Right ventricle myocardium superior (tissue), 1 donor: ENCODE measurements at regions of chr1 and their contacts with region 1.

Region 1: DNA sequence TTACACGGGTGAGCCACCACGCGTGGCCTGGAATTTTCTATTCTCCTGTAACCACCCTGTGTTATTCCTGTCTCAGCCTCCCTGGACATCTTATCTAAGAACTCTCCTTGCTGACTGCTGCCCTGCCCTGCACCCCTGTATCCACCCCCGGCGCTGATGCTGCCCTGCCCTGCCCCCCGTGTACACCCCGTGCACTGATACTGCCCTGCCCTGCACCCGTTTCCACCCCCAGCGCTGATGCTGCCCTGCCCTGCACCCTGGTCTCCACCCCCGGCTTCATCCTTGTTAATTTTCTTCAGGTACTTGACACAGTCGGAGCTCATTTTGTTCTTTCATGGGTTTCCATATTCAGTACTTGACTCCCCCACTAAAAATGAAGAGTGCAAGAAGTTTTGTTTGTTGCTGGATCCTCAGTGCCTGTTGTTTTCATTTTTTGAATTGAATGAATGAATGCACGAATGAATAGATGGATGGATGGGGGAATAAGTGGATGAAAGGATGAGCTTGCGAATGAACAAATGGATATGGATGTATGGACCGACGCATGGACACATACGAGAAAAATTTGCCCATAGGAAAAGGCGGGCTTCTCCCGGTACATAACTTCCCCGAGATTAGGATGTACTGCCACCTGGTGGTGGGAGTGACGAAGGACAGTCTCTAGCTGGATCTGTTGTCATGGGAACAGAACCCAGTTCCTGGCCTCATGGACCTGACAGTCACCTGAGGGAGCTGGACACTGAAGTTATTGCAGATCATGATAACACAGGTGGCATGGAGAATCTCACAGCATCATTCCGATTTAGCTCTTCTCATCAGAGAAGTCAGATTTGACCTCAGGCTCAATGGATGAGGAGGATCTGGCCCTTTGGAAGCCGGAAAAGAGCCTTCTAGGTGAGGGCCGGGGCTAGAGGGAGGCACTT is 14.9 kb downstream of the AADACL4 start:
- DNase-seq: peak; percentile 76
- ATAC-seq: peak; percentile 94

Region 2: DNA sequence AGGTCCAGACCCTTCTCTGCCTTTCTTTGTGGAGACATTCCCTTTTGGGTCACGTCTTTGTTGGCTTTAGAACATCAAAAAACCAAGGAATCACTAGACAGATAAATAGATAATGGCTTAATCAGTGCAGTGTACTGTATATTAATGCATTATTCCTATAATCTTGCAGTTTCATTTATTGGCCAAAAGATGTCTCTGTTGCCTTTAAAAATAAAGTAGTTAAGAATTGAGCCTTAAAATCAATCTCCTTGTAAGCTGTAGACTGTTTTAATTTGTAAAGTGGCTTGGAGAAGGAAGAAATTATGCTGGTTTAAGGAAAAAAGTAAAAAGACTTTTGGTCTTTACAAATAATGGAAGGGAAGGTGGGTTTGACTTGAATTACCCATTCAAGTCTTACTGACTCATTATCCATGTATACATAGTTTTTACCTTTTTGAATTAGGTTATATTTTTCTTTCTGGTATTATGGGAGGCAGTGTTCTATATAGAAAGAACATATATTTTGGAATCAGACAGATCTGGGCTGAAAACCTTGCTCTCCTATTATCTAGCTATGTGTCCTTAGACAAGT is 344.4 kb before region 1 on chr1:
- intact Hi-C with region 1: loop called (anchors 5 kb)
- DNase-seq: no peak
- ATAC-seq: peak; percentile 58

Region 3: GRCh38 chr1:12407050-12407961 is 251.5 kb before region 1 on chr1:
- intact Hi-C with region 1: loop called (anchors 10 kb)
- DNase-seq: no peak
- ATAC-seq: peak; percentile 69